SK-N-SH (cell line): ENCODE measurements at regions of chr17 and their contacts with region 1.

Region 1: GRCh38 chr17:73255671-73256181 is 6.0 kb downstream of the CPSF4L start:
- DNase-seq: peak; percentile 91
- H3K4me3 ChIP-seq: no peak overlapping the region
- H3K27ac ChIP-seq: peak overlapping the region in 1 of 2 experiments; percentile 47; a peak in 2 of 4 replicates
- H3K4me1 ChIP-seq: peaks cover 0 to 14% of the 10 kb centered on the region in 2 experiments; a peak in 1 of 4 replicates
- H3K27me3 ChIP-seq: no peaks in the 10 kb centered on the region
- CTCF ChIP-seq: peak; percentile 100
- EP300 ChIP-seq: peak in 1 of 2 experiments; percentile 94; a peak in 2 of 4 replicates
- RAD21 ChIP-seq: peak; percentile 100

Region 2: DNA sequence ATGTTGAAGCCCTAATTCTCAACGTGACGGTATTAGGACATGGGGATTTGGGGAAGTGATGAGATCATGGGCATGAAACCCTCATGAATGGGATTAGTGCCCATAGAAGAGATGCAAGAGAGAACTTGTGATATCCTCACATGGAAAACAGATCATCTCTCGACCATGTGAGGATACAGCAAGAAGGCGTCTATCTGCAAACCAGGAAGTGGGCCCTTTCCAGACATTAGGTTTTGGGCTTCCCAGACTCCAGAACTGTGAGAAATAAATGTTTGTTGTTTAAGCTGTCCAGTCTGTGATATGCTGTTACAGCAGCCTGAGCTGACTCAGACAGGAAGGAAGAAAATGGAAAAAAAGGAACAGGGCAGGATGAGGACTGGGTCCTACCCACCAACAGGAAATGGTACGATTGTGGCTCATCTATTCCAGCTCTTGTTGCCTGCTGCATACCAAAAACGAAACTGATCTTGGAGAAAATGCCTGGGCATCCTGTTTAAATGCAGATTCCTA is 112.8 kb before region 1 on chr17:
- CTCF ChIA-PET with region 1: no interaction called
- POLR2A ChIA-PET with region 1: no interaction called
- DNase-seq: no peak
- H3K4me3 ChIP-seq: no peak overlapping the region
- H3K27ac ChIP-seq: no peak overlapping the region
- H3K4me1 ChIP-seq: no peaks in the 10 kb centered on the region
- H3K27me3 ChIP-seq: no peaks in the 10 kb centered on the region
- CTCF ChIP-seq: no peak
- EP300 ChIP-seq: no peak
- RAD21 ChIP-seq: no peak

Region 3: DNA sequence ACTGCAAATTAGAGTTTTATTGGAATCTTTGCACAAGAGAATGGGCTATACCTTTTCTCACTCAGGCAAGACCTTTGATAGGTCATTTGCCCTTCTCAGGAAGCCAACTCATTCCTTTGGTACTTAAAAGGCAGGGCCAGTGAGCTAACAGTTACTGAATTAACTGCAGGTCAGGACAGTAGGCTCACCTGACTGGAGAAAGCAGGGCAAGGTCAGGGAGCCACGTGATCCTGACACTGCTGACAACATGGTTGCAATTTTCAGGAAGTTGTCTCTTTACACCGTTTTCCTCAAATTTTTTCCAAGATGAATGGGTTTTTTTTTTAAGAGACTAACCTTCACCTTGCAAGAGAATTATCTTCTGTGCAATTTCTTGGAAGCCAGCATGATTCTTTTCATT is 15.2 kb before region 1 on chr17:
- CTCF ChIA-PET with region 1: interaction called, 28 read pairs
- POLR2A ChIA-PET with region 1: no interaction called
- DNase-seq: no peak
- H3K4me3 ChIP-seq: no peak overlapping the region
- H3K27ac ChIP-seq: no peak overlapping the region
- H3K4me1 ChIP-seq: peaks cover 0 to 3% of the 10 kb centered on the region in 2 experiments; a peak in 1 of 4 replicates
- H3K27me3 ChIP-seq: no peaks in the 10 kb centered on the region
- CTCF ChIP-seq: no peak
- EP300 ChIP-seq: no peak
- RAD21 ChIP-seq: no peak

Region 4: GRCh38 chr17:73291260-73291801 is 35.6 kb after region 1 on chr17:
- CTCF ChIA-PET with region 1: interaction called, 16 read pairs
- POLR2A ChIA-PET with region 1: no interaction called
- DNase-seq: no peak
- H3K4me3 ChIP-seq: 0 out of 4 replicates have a peak overlapping the region, but pooled peaks of 1 of the 2 experiments have one; percentile 28
- H3K27ac ChIP-seq: peak overlapping the region in 1 of 2 experiments; percentile 88; a peak in 2 of 4 replicates
- H3K4me1 ChIP-seq: peaks cover 33 to 34% of the 10 kb centered on the region in 2 experiments; a peak in 3 of 4 replicates
- H3K27me3 ChIP-seq: no peaks in the 10 kb centered on the region
- CTCF ChIP-seq: no peak
- EP300 ChIP-seq: peak in 1 of 2 experiments; percentile 83; a peak in 1 of 4 replicates
- RAD21 ChIP-seq: no peak

Region 5: DNA sequence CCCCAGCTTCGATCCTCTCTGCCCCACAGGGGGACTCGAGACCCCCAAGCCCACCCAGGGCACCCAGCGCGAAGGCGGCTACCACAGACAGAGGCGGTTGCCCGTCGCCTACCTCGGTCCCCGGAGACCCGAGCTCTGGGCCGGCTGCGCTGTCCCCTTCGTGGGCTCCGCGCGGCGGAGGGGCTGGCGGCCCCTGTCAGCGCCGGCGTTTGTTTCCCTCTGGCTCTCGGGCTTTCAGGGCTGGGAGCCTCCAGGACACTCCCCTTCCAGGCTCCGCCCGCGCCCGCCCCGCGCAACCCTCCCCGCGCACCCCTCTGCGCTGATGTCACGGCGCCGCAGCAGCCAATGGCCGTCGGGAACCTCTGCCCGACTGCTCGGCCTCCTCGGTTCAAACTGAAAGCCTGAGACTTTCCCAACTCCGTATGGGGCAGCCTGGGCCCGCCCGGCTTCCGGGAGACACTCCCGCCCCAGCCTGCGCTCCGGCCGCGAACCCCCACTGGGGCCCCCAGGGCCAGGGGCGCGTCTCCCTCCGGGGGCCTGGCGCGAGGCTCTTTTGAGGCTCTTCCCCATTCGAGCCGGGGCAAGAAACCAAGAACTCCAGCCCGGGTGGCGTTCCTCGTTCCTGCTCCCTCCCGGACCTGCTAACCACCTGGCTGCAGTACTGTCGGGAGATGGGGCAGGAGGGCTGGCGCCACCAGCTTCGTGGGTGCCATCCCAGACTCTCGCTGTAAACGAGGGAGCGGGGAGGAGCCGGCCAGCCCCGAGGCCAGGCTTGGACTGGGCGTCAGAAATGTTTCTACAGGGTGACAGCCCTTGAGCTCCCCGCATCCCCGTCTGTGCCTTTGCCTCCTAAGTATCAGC is 56.3 kb after region 1 on chr17 and contains the start of gene CDC42EP4:
- CTCF ChIA-PET with region 1: interaction called, 66 read pairs
- POLR2A ChIA-PET with region 1: interaction called, 7 read pairs
- DNase-seq: peak; percentile 98
- H3K4me3 ChIP-seq: peak within 1 kb of the TSS; percentile 86 to 99
- H3K27ac ChIP-seq: peak within 1 kb of the TSS; percentile 93 to 96
- H3K4me1 ChIP-seq: peaks cover 30 to 35% of the 10 kb centered on the region in 2 experiments; a peak in 3 of 4 replicates
- H3K27me3 ChIP-seq: no peaks in the 10 kb centered on the region
- CTCF ChIP-seq: no peak; the same call in 1 of the 2 replicates
- EP300 ChIP-seq: 0 out of 4 replicates have a peak, but pooled peaks of 1 of the 2 experiments have one; percentile 21
- RAD21 ChIP-seq: no peak; the same call in 1 of the 2 replicates
- polyA plus RNA-seq, gene CDC42EP4: 23.7 and 28.3 TPM in 2 replicates

Region 6: GRCh38 chr17:73347351-73347750 is 91.6 kb after region 1 on chr17:
- CTCF ChIA-PET with region 1: interaction called, 26 read pairs
- POLR2A ChIA-PET with region 1: no interaction called
- DNase-seq: no peak
- H3K4me3 ChIP-seq: no peak overlapping the region
- H3K27ac ChIP-seq: no peak overlapping the region
- H3K4me1 ChIP-seq: peaks cover 16 to 42% of the 10 kb centered on the region in 2 experiments
- H3K27me3 ChIP-seq: no peaks in the 10 kb centered on the region
- CTCF ChIP-seq: no peak
- EP300 ChIP-seq: no peak
- RAD21 ChIP-seq: no peak

Region 7: GRCh38 chr17:73393962-73394361 is 138.2 kb after region 1 on chr17:
- CTCF ChIA-PET with region 1: interaction called, 12 read pairs
- POLR2A ChIA-PET with region 1: no interaction called
- DNase-seq: peak; percentile 71
- H3K4me3 ChIP-seq: no peak overlapping the region
- H3K27ac ChIP-seq: no peak overlapping the region
- H3K4me1 ChIP-seq: peaks cover 0 to 4% of the 10 kb centered on the region in 2 experiments; a peak in 1 of 4 replicates
- H3K27me3 ChIP-seq: peaks cover 16% of the 10 kb centered on the region; the same call in 1 of the 2 replicates
- CTCF ChIP-seq: no peak
- EP300 ChIP-seq: no peak
- RAD21 ChIP-seq: no peak